Ascending aorta (tissue), 2 donors: ENCODE measurements at regions of chr1 and their contacts with region 1.

Region 1: DNA sequence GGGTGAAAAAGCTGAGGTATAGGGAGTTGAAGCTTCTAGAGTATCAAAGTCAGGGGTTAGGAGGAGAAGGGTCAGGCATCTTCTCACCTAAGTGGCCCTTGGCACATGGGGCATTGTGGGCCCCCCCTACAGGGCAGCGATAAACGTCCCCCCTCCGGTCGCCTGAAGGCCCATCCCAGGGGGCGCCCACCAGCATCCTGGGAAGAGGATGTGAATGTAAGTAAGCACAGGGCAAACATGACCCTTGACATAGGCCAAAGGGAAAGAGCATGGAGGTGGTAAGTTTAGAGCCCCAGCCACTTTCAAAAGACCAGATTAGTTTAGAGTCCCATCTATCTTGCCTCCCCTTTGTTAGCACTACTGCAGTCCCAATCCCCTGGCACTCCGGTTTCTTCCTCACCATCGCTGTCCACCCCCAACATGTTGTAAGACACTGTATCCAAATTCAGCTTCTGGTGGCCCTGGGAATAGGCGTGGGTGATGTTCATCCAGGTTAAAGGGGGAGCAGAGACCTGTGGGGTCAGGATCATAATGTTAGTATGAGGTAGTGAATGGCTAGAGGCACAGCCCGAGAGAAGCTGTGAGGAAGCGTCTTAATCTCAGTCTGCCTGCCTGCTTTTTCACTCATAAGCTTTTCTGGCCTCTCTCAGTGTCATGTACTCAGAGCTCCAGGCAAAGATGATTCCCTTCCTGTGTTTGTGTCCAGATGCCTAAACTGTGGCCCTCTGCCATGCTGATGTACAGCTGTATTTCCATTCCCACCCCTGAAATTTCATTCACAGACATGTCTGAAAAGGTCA is 2.7 kb downstream of the ITGA10 start:
- DNase-seq: peak in 1 of 2 donors; percentile 48
- H3K4me3 ChIP-seq: peak overlapping the region; percentile 1 to 70
- H3K27ac ChIP-seq: peak overlapping the region; percentile 77 to 86
- H3K4me1 ChIP-seq: peaks cover 8 to 9% of the 10 kb centered on the region in 2 donors
- H3K27me3 ChIP-seq: no peaks in the 10 kb centered on the region
- CTCF ChIP-seq: no peak

Region 2: DNA sequence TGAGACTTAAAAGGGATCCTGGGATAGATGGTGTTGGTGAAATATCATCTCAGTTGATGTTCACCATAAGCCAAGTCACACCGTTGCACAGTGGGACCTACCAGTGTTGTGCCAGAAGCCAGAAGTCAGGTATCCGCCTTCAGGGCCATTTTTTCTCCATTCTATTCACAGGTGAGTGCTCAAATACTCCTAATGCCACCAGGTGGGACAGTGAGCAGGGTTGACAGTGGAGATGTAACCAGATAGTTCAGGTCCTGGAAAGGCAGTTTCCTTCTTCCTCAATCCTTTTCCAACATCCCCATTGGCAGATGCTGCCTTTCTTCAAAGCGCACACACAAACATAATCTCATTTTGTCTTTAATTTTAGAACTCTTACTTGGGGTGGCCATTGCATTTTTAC is 176.3 kb before region 1 on chr1:
- intact Hi-C with region 1: no loop called
- DNase-seq: no peak
- H3K4me3 ChIP-seq: no peak overlapping the region
- H3K27ac ChIP-seq: no peak overlapping the region
- H3K4me1 ChIP-seq: no peaks in the 10 kb centered on the region
- H3K27me3 ChIP-seq: no peaks in the 10 kb centered on the region
- CTCF ChIP-seq: no peak

Region 3: GRCh38 chr1:145845514-145846161 is 61.5 kb before region 1 on chr1 and contains the start of gene NUDT17:
- intact Hi-C with region 1: loop called (anchors 2 kb)
- DNase-seq: peak; percentile 17 to 88
- H3K4me3 ChIP-seq: peak within 1 kb of the TSS; percentile 51 to 65
- H3K27ac ChIP-seq: peak within 1 kb of the TSS; percentile 73 to 78
- H3K4me1 ChIP-seq: peaks cover 0 to 21% of the 10 kb centered on the region in 2 donors
- H3K27me3 ChIP-seq: no peaks in the 10 kb centered on the region
- CTCF ChIP-seq: peak; percentile 88 to 98 (median 94)
- total RNA-seq, gene NUDT17: not detected

Region 4: GRCh38 chr1:145891587-145892485 is 15.3 kb before region 1 on chr1:
- intact Hi-C with region 1: loop called (anchors 1 kb)
- DNase-seq: peak; percentile 89 to 99
- H3K4me3 ChIP-seq: peak overlapping the region; percentile 10 to 23
- H3K27ac ChIP-seq: peak overlapping the region; percentile 92 to 98
- H3K4me1 ChIP-seq: peaks cover 14 to 36% of the 10 kb centered on the region in 2 donors
- H3K27me3 ChIP-seq: no peaks in the 10 kb centered on the region
- CTCF ChIP-seq: peak; percentile 93 to 97 (median 95)

Region 5: GRCh38 chr1:145927063-145927886 is 20.1 kb after region 1 on chr1 and contains the start of gene RBM8A:
- intact Hi-C with region 1: loop called (anchors 1 kb)
- DNase-seq: peak; percentile 88 to 98
- H3K4me3 ChIP-seq: peak within 1 kb of the TSS; percentile 70 to 73
- H3K27ac ChIP-seq: peak within 1 kb of the TSS; percentile 97 to 98
- H3K4me1 ChIP-seq: peaks cover 6 to 12% of the 10 kb centered on the region in 2 donors
- H3K27me3 ChIP-seq: no peaks in the 10 kb centered on the region
- CTCF ChIP-seq: peak; percentile 63 to 76 (median 68)
- total RNA-seq, gene RBM8A: 48.9 TPM